ENCODE measurements at regions of chr11 and their contacts with region 1.

Region 1: GRCh38 chr11:124875943-124876817 is 10.9 kb downstream of the ROBO3 start:
- DNase-seq: peak; percentile 62 to 84 (median 75)
- H3K4me3 ChIP-seq: peak overlapping the region; percentile 84
- H3K4me3 Mint-ChIP-seq: peak overlapping the region; percentile 87 to 97 (median 92)
- H3K27ac ChIP-seq: peak overlapping the region; percentile 59
- H3K27ac Mint-ChIP-seq: peak overlapping the region; percentile 68 to 98 (median 92)
- H3K4me1 ChIP-seq: peaks cover 16% of the 10 kb centered on the region
- H3K4me1 Mint-ChIP-seq: peaks cover 14 to 26% (median 21%) of the 10 kb centered on the region in 3 donors
- H3K27me3 ChIP-seq: peaks cover 3% of the 10 kb centered on the region
- H3K27me3 Mint-ChIP-seq: peaks cover 27 to 41% of the 10 kb centered on the region in 2 donors

Region 2: GRCh38 chr11:124865921-124866583 is 10.1 kb before region 1 on chr11:
- CTCF ChIA-PET with region 1: interaction called, 21 read pairs
- POLR2A ChIA-PET with region 1: interaction called, 3 read pairs
- DNase-seq: peak; percentile 27 to 56 (median 34)
- H3K4me3 ChIP-seq: no peak overlapping the region
- H3K4me3 Mint-ChIP-seq: peak overlapping the region in 4 of 7 donors; percentile 41 to 62 (median 47)
- H3K27ac ChIP-seq: no peak overlapping the region
- H3K27ac Mint-ChIP-seq: no peak overlapping the region
- H3K4me1 ChIP-seq: peaks cover 32% of the 10 kb centered on the region
- H3K4me1 Mint-ChIP-seq: peaks cover 33 to 54% (median 41%) of the 10 kb centered on the region in 3 donors
- H3K27me3 ChIP-seq: peaks cover 77% of the 10 kb centered on the region
- H3K27me3 Mint-ChIP-seq: peaks cover 79 to 96% of the 10 kb centered on the region in 2 donors

Region 3: DNA sequence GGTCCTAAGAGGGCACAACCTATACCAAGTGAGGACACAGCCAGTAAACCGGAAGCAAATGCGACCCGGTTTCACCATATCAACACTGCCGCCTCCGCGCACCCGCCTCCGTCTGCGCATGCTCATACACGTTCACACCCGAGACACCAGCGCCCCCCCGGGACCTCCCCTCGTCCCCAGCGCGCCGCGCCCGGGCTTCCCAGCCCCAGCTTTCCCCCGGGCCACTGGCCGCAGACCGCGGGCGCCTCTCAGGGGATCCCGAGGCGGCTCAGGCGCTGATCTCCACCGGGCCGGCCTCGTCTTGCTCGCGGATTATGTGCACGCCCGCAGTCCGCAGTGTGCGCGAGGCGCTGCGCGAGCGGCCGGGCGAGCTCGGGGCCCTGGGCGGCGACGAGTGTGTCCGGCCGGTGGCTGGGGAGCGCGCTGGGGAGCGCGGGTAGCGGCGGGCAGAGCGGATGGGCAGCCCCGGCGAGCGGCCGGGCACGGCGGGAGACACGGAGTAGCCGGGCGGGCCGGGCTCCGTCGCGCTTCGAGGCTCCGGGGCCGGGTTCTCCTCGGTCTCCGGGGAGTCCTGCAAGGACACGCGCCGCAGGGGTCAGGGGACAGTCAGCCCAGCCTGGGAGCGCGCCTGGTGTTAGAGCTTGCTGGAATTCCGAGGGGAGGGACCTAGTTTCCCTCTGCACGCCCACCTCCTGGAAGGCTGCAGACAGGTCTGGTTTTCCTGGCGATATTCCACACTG is 44.9 kb after region 1 on chr11:
- CTCF ChIA-PET with region 1: interaction called, 21 read pairs
- POLR2A ChIA-PET with region 1: no interaction called
- DNase-seq: peak; percentile 57 to 89 (median 77)
- H3K4me3 ChIP-seq: peak overlapping the region; percentile 33
- H3K4me3 Mint-ChIP-seq: peak overlapping the region; percentile 77 to 89 (median 82)
- H3K27ac ChIP-seq: no peak overlapping the region
- H3K27ac Mint-ChIP-seq: peak overlapping the region in 7 of 8 donors; percentile 28 to 77 (median 58)
- H3K4me1 ChIP-seq: peaks cover 29% of the 10 kb centered on the region
- H3K4me1 Mint-ChIP-seq: peaks cover 17 to 22% (median 21%) of the 10 kb centered on the region in 3 donors
- H3K27me3 ChIP-seq: no peaks in the 10 kb centered on the region
- H3K27me3 Mint-ChIP-seq: peaks cover 0 to 9% of the 10 kb centered on the region in 2 donors

Region 4: GRCh38 chr11:124953753-124954589 is 77.8 kb after region 1 on chr11 and contains the start of gene CCDC15:
- CTCF ChIA-PET with region 1: interaction called, 20 read pairs
- POLR2A ChIA-PET with region 1: interaction called, 17 read pairs
- DNase-seq: peak; percentile 92 to 96 (median 94)
- H3K4me3 ChIP-seq: peak within 1 kb of the TSS; percentile 94
- H3K4me3 Mint-ChIP-seq: no peak within 1 kb of the TSS
- H3K27ac ChIP-seq: peak within 1 kb of the TSS; percentile 81
- H3K27ac Mint-ChIP-seq: no peak within 1 kb of the TSS
- H3K4me1 ChIP-seq: peaks cover 51% of the 10 kb centered on the region
- H3K4me1 Mint-ChIP-seq: peaks cover 0 to 6% (median 4%) of the 10 kb centered on the region in 3 donors
- H3K27me3 ChIP-seq: no peaks in the 10 kb centered on the region
- H3K27me3 Mint-ChIP-seq: no peaks in the 10 kb centered on the region
- total RNA-seq, gene CCDC15: 3.6 to 3.7 TPM

Measured in CD8-positive, alpha-beta memory T cell (primary cell).